H1 (cell line): ENCODE measurements at regions of chr2 and their contacts with region 1.

Region 1: GRCh38 chr2:16756831-16757644 is 91.4 kb upstream of the CYRIA start:
- DNase-seq: peak; percentile 59 to 84
- H3K4me3 ChIP-seq: no peak overlapping the region
- H3K27ac ChIP-seq: no peak overlapping the region
- H3K4me1 ChIP-seq: no peaks in the 10 kb centered on the region
- H3K27me3 ChIP-seq: no peaks in the 10 kb centered on the region
- CTCF ChIP-seq: peak; percentile 78 to 95 (median 88)
- EP300 ChIP-seq: no peak
- POLR2A ChIP-seq: no peak
- RAD21 ChIP-seq: peak; percentile 97 to 99

Region 2: GRCh38 chr2:16525265-16525887 is 231.7 kb before region 1 on chr2:
- CTCF ChIA-PET with region 1: interaction called, 13 read pairs
- POLR2A ChIA-PET with region 1: no interaction called
- DNase-seq: peak in 1 of 2 experiments; percentile 89
- H3K4me3 ChIP-seq: no peak overlapping the region
- H3K27ac ChIP-seq: no peak overlapping the region
- H3K4me1 ChIP-seq: peaks cover 0 to 4% (median 0%) of the 10 kb centered on the region in 4 experiments; a peak in 2 of 7 replicates
- H3K27me3 ChIP-seq: no peaks in the 10 kb centered on the region
- CTCF ChIP-seq: peak; percentile 73 to 87 (median 86)
- EP300 ChIP-seq: no peak
- POLR2A ChIP-seq: no peak
- RAD21 ChIP-seq: peak; percentile 89 to 91

Region 3: GRCh38 chr2:16630463-16630862 is 126.6 kb before region 1 on chr2:
- CTCF ChIA-PET with region 1: interaction called, 208 read pairs
- POLR2A ChIA-PET with region 1: no interaction called
- DNase-seq: no peak
- H3K4me3 ChIP-seq: no peak overlapping the region
- H3K27ac ChIP-seq: no peak overlapping the region
- H3K4me1 ChIP-seq: peaks cover 0 to 3% (median under 1%) of the 10 kb centered on the region in 4 experiments; a peak in 4 of 7 replicates
- H3K27me3 ChIP-seq: no peaks in the 10 kb centered on the region
- CTCF ChIP-seq: no peak
- EP300 ChIP-seq: no peak
- POLR2A ChIP-seq: no peak
- RAD21 ChIP-seq: no peak

Region 4: GRCh38 chr2:16650287-16651249 is 106.5 kb before region 1 on chr2:
- CTCF ChIA-PET with region 1: interaction called, 15 read pairs
- POLR2A ChIA-PET with region 1: no interaction called
- DNase-seq: no peak
- H3K4me3 ChIP-seq: no peak overlapping the region
- H3K27ac ChIP-seq: no peak overlapping the region
- H3K4me1 ChIP-seq: peaks cover 0 to 3% (median 0%) of the 10 kb centered on the region in 4 experiments; a peak in 2 of 7 replicates
- H3K27me3 ChIP-seq: no peaks in the 10 kb centered on the region
- CTCF ChIP-seq: no peak
- EP300 ChIP-seq: no peak
- POLR2A ChIP-seq: no peak
- RAD21 ChIP-seq: no peak

Region 5: GRCh38 chr2:16739778-16740581 is 17.1 kb before region 1 on chr2:
- CTCF ChIA-PET with region 1: interaction called, 31 read pairs
- POLR2A ChIA-PET with region 1: no interaction called
- DNase-seq: no peak
- H3K4me3 ChIP-seq: no peak overlapping the region
- H3K27ac ChIP-seq: no peak overlapping the region
- H3K4me1 ChIP-seq: no peaks in the 10 kb centered on the region
- H3K27me3 ChIP-seq: no peaks in the 10 kb centered on the region
- CTCF ChIP-seq: no peak
- EP300 ChIP-seq: no peak
- POLR2A ChIP-seq: no peak
- RAD21 ChIP-seq: no peak

Region 6: DNA sequence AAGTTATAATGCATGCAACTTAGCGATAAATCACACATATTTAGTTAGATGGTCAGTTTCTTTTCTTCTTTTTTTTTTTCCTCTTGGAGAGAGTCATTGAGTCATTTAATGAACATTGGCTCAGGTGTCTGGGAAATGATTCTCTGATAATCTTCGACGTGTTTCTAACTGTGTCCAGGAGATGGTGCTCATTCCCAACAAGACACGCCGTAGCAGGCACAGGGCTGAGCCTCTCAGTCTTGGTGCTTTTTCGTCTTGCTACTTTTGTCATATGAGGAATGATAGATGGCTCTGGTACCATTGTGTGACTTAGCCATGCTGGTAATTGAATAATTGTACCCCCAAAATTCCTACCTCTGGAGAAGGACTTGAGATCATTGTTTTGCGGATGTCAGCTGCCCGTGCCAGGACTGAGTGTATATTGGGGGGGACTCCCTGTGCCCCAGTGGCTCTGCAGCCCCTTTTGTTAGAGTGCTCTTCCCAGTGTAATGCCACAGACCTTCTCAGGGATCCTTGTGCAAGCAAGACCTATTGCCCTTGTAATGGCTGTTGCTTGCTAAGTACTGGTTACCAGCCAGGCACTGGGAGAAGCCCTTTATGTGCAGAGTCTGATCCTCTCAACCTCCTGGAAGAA is 16.2 kb after region 1 on chr2:
- CTCF ChIA-PET with region 1: interaction called, 14 read pairs
- POLR2A ChIA-PET with region 1: no interaction called
- DNase-seq: peak in 1 of 2 experiments; percentile 62
- H3K4me3 ChIP-seq: no peak overlapping the region
- H3K27ac ChIP-seq: no peak overlapping the region
- H3K4me1 ChIP-seq: peaks cover 0 to 12% (median 3%) of the 10 kb centered on the region in 4 experiments; a peak in 2 of 7 replicates
- H3K27me3 ChIP-seq: no peaks in the 10 kb centered on the region
- CTCF ChIP-seq: peak; percentile 53 to 79 (median 72)
- EP300 ChIP-seq: no peak
- POLR2A ChIP-seq: no peak
- RAD21 ChIP-seq: peak; percentile 96 to 98

Region 7: DNA sequence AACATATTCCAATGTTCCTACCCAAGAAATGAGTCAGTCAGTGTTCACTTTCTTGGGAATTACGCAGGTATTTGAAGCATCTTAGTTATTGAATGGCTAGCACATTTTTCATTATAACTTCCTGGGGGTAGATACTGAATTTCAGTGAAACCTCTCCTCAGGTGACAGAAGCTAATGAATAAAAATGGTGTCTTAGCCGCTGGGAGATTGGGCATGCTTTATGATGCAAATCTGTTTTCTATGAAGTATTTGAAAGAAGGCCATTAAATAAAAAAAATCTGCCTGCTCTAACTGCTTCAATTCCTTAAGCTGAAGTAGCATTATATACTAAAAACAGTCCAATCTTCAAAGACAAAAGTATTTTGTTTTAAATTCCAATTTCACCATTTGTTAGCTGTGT is 41.4 kb after region 1 on chr2:
- CTCF ChIA-PET with region 1: no interaction called
- POLR2A ChIA-PET with region 1: no interaction called
- DNase-seq: no peak
- H3K4me3 ChIP-seq: no peak overlapping the region
- H3K27ac ChIP-seq: no peak overlapping the region
- H3K4me1 ChIP-seq: peaks cover 1 to 11% (median 7%) of the 10 kb centered on the region in 4 experiments; a peak in 5 of 7 replicates
- H3K27me3 ChIP-seq: no peaks in the 10 kb centered on the region
- CTCF ChIP-seq: no peak
- EP300 ChIP-seq: no peak
- POLR2A ChIP-seq: no peak
- RAD21 ChIP-seq: no peak

Region 8: GRCh38 chr2:17000184-17000482 is 243.1 kb after region 1 on chr2:
- CTCF ChIA-PET with region 1: no interaction called
- POLR2A ChIA-PET with region 1: no interaction called
- DNase-seq: no peak
- H3K4me3 ChIP-seq: no peak overlapping the region
- H3K27ac ChIP-seq: no peak overlapping the region
- H3K4me1 ChIP-seq: no peaks in the 10 kb centered on the region
- H3K27me3 ChIP-seq: no peaks in the 10 kb centered on the region
- CTCF ChIP-seq: no peak
- EP300 ChIP-seq: no peak
- POLR2A ChIP-seq: no peak
- RAD21 ChIP-seq: no peak